CD4-positive, alpha-beta T cell (primary cell): ENCODE measurements at regions of chr6 and their contacts with region 1.

Region 1: DNA sequence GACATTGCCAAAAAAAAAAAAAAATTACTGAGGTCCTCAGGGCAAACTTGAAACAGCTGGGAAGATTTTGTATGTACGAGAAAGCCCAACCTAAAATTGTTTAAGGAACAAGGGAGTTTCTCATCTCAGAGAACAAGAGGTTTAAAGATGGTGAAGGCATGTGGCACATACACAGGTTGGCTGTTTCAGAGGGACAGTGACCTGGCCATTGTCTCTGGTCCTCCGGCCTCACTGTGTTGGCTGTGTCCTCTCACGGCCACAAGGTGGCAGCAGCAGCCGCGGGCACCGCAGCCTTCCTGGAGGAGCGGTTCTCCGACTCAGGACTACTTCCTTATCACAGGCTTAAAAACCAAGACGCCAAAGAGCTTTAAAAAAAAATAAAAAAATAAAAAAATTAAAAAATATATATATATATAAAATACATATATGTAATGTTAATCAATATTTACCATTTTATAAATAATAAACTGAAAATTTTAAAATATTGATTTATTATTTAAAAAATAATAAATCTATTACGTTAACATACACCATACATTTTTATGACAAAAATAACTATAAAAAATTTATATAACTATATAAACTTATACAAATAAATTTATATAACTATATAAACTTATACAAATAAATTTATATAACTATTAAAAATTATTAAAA is 52.8 kb downstream of the GTF2H5 start:
- DNase-seq: peak; percentile 44 to 87 (median 66)
- ATAC-seq: peak; percentile 74
- H3K4me3 ChIP-seq: no peak overlapping the region
- H3K4me3 Mint-ChIP-seq: no peak overlapping the region
- H3K27ac ChIP-seq: no peak overlapping the region
- H3K27ac Mint-ChIP-seq: no peak overlapping the region
- H3K4me1 ChIP-seq: peaks cover 2% of the 10 kb centered on the region
- H3K4me1 Mint-ChIP-seq: peaks cover 3% of the 10 kb centered on the region
- H3K27me3 ChIP-seq: no peaks in the 10 kb centered on the region
- H3K27me3 Mint-ChIP-seq: no peaks in the 10 kb centered on the region
- CTCF ChIP-seq: peak; percentile 92

Region 2: DNA sequence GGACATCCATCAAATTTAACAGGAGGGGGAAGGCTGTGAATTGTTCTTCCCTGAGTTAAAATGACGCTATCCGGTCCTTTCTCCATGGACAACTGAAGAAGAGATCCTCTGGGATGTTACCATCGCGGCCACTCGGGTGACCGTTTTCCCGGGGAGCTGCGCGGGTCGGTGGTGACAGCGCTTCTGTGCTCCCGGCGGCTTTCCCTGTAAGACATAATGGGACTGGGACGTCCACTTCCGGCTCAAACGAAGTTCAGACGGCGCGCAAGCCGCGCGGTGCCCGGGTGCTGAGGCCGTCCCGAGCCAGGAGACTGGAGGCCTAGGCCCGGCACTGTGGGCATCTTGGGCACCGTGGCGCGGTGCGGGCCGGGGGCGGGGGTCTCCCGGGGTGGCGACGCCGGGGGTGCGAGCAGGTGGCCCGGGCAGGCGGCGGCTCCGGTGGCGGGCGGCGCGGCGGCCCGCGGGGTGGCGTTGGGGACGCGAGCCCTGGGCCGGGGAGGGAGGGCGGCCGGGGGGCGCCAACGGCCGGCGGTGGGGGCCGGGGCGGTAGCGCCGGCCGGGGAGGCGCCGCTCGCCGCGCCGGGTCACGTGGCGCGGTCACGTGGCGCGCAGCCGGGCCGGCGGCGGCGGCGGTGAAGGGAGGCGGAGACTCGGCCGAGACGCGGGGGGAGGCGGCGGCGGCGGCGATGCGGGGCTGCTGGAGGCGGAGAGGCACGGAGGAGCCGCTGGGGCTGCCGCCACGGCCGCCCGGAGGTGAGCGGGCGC is 10.8 kb after region 1 on chr6:
- CTCF ChIA-PET with region 1: interaction called, 17 read pairs
- POLR2A ChIA-PET with region 1: interaction called, 3 read pairs
- intact Hi-C with region 1: no loop called
- DNase-seq: peak; percentile 58 to 91 (median 71)
- ATAC-seq: peak; percentile 74
- H3K4me3 ChIP-seq: peak overlapping the region; percentile 63
- H3K4me3 Mint-ChIP-seq: peak overlapping the region; percentile 87
- H3K27ac ChIP-seq: peak overlapping the region; percentile 59 to 71
- H3K27ac Mint-ChIP-seq: peak overlapping the region; percentile 92
- H3K4me1 ChIP-seq: peaks cover 19% of the 10 kb centered on the region
- H3K4me1 Mint-ChIP-seq: peaks cover 40% of the 10 kb centered on the region
- H3K27me3 ChIP-seq: no peaks in the 10 kb centered on the region
- H3K27me3 Mint-ChIP-seq: no peaks in the 10 kb centered on the region
- CTCF ChIP-seq: no peak

Region 3: DNA sequence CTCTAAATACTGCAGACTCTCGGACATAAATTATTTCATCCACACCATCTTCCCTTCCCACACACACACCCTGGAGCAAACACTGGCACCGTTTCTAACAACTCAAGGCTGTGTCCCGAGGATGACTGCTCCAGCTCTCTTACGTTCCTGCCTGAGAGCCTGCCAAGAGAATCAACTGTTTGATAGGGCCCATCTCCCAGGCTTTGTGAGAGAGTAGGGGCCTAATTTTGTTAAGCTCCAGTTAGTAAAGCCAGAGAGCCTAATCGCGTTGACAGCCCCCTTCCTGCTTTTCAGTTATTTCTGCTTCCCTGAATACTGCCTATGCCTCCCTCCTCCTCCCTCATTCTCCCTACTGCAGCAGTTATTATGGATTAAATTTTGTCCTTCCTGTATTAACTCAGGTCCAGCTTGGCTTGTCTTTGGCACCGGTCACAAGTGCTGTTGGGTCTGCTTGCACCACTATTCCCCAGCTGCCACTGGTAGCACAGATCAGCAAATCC is 220.9 kb after region 1 on chr6:
- CTCF ChIA-PET with region 1: no interaction called
- POLR2A ChIA-PET with region 1: no interaction called
- intact Hi-C with region 1: loop called in 1 of 2 experiments (anchors 10 kb)
- DNase-seq: no peak
- ATAC-seq: no peak
- H3K4me3 ChIP-seq: no peak overlapping the region
- H3K4me3 Mint-ChIP-seq: no peak overlapping the region
- H3K27ac ChIP-seq: no peak overlapping the region
- H3K27ac Mint-ChIP-seq: no peak overlapping the region
- H3K4me1 ChIP-seq: no peaks in the 10 kb centered on the region
- H3K4me1 Mint-ChIP-seq: peaks cover 3% of the 10 kb centered on the region
- H3K27me3 ChIP-seq: no peaks in the 10 kb centered on the region
- H3K27me3 Mint-ChIP-seq: no peaks in the 10 kb centered on the region
- CTCF ChIP-seq: no peak

Region 4: DNA sequence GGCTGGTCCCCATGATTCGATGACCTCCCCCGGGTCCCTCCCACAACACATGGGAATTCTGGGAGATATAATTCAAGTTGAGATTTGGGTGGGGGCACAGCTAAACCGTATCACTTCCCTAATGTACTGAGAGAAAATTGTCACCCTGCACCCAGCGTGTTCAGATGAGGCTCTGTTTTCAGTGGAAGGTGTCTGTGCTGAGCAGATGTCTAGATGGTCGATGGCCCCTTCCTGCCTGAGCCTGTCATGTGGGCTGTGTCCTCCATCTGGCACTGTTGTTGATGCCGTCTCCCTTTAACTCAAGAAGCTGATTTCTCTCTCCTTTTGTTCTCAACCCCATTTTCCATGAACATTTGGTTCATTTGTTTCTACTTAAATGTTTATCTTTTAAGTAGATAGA is 375.9 kb after region 1 on chr6:
- CTCF ChIA-PET with region 1: interaction called, 9 read pairs
- POLR2A ChIA-PET with region 1: no interaction called
- intact Hi-C with region 1: loop called in 1 of 2 experiments (anchors 2 kb)
- DNase-seq: no peak
- ATAC-seq: no peak
- H3K4me3 ChIP-seq: no peak overlapping the region
- H3K4me3 Mint-ChIP-seq: no peak overlapping the region
- H3K27ac ChIP-seq: no peak overlapping the region
- H3K27ac Mint-ChIP-seq: no peak overlapping the region
- H3K4me1 ChIP-seq: no peaks in the 10 kb centered on the region
- H3K4me1 Mint-ChIP-seq: no peaks in the 10 kb centered on the region
- H3K27me3 ChIP-seq: no peaks in the 10 kb centered on the region
- H3K27me3 Mint-ChIP-seq: no peaks in the 10 kb centered on the region
- CTCF ChIP-seq: no peak

Region 5: GRCh38 chr6:158686791-158687381 is 466.0 kb after region 1 on chr6:
- CTCF ChIA-PET with region 1: no interaction called
- POLR2A ChIA-PET with region 1: no interaction called
- intact Hi-C with region 1: loop called in 1 of 2 experiments (anchors 1 kb)
- DNase-seq: peak in 11 of 14 experiments; percentile 7 to 92 (median 49)
- ATAC-seq: peak; percentile 94
- H3K4me3 ChIP-seq: peak overlapping the region; percentile 13
- H3K4me3 Mint-ChIP-seq: peak overlapping the region; percentile 22
- H3K27ac ChIP-seq: peak overlapping the region; percentile 76 to 89
- H3K27ac Mint-ChIP-seq: peak overlapping the region; percentile 95
- H3K4me1 ChIP-seq: peaks cover 58% of the 10 kb centered on the region
- H3K4me1 Mint-ChIP-seq: peaks cover 54% of the 10 kb centered on the region
- H3K27me3 ChIP-seq: no peaks in the 10 kb centered on the region
- H3K27me3 Mint-ChIP-seq: no peaks in the 10 kb centered on the region
- CTCF ChIP-seq: no peak